BJ (cell line): ENCODE measurements at regions of chr1 and their contacts with region 1.

Region 1: GRCh38 chr1:212814537-212815334 is 23.0 kb downstream of the TATDN3 start:
- DNase-seq: no peak
- H3K4me3 ChIP-seq: no peak overlapping the region
- H3K27me3 ChIP-seq: no peaks in the 10 kb centered on the region
- CTCF ChIP-seq: peak; percentile 27; the same call in 1 of the 2 replicates

Region 2: GRCh38 chr1:212613455-212614390 is 201.0 kb before region 1 on chr1:
- CTCF ChIA-PET with region 1: no interaction called
- POLR2A ChIA-PET with region 1: interaction called, 20 read pairs
- DNase-seq: no peak
- H3K4me3 ChIP-seq: no peak overlapping the region
- H3K27me3 ChIP-seq: no peaks in the 10 kb centered on the region; the same call in 1 of the 2 replicates
- CTCF ChIP-seq: no peak

Region 3: DNA sequence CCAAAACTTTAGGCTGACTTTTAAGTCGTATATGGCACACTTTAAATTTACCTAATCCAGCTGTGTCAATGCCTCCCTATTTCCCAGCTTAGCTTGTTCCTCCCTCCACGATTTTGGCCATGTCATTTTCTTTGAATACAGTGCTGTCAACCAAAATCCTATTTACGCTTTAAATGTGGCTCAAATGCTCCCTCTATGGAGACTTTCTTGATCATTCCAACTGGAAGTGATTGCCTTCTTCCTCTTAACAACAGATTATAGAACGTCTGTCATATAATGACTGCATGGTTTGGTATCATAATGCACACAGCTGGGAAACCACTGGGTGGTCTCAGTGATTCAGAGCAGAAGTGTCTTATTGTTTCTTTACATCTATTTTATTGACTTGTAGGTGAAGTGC is 96.2 kb before region 1 on chr1:
- CTCF ChIA-PET with region 1: no interaction called
- POLR2A ChIA-PET with region 1: no interaction called
- DNase-seq: no peak
- H3K4me3 ChIP-seq: no peak overlapping the region
- H3K27me3 ChIP-seq: no peaks in the 10 kb centered on the region
- CTCF ChIP-seq: peak; percentile 20; the same call in 1 of the 2 replicates

Region 4: DNA sequence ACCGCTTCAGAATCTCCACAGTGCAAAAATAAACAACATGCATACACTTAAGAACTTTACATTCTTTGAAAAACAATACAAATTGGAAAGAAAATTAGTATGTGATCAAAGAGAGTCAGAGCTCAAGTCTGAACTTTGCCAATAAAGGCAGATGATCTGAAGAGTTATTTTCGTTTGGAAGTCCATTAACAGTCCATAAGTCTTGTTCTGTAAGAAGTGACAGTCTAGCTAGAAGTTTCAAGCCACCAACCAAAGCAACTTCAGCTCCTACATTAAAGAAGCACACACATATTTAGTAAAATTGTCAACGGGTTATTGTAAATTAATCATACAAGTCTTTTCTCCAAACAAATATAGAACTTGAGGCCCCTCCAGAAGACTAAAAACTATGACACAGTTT is 180.2 kb after region 1 on chr1:
- CTCF ChIA-PET with region 1: interaction called, 18 read pairs
- POLR2A ChIA-PET with region 1: no interaction called
- DNase-seq: no peak
- H3K4me3 ChIP-seq: no peak overlapping the region
- H3K27me3 ChIP-seq: no peaks in the 10 kb centered on the region
- CTCF ChIP-seq: no peak